ENCODE measurements at regions of chr11 and their contacts with region 1.

Region 1: GRCh38 chr11:47248664-47249377 is at the start of gene ACP2:
- DNase-seq: peak; percentile 90
- H3K4me3 Mint-ChIP-seq: peak within 1 kb of the TSS; percentile 98
- H3K27ac Mint-ChIP-seq: peak within 1 kb of the TSS; percentile 93
- H3K4me1 Mint-ChIP-seq: peaks cover 25% of the 10 kb centered on the region
- H3K27me3 Mint-ChIP-seq: no peaks in the 10 kb centered on the region
- total RNA-seq, gene ACP2: 26.6 to 27.1 TPM

Region 2: DNA sequence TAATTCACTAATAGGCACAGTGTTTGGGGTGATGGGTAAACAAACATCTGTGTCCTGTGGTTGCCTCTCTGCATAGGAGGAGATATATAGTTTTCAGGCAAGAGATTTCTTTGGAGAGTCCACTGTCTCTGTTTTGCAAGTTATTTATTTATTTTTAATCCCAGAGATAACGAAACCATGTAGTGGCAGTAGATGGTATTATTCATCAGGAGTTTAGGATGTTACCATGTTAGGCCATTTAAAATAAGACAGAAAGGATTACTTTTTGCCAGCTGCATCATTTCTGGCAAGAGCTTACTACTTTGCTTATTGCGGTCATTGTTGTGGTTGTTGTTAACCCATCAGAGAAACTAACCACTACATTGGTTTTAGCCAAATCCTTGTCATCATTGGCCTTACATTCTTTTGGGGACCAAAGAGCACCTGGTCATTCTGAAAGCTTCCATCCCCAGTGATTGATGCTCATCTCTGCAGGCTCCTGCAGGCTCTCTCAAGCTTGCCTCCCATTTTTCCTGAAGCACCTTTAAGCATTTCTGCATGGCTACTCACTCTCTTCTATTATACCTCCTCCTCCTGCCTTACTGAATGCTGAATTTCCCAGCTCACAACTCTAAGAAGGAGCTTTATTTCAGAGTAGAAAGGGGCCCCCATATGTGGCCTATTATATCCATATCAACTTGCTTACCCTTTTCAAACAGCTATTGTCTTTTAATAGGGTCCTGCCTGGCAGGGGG is 227.9 kb before region 1 on chr11:
- CTCF ChIA-PET with region 1: no interaction called
- POLR2A ChIA-PET with region 1: no interaction called
- DNase-seq: no peak
- H3K4me3 Mint-ChIP-seq: no peak overlapping the region
- H3K27ac Mint-ChIP-seq: no peak overlapping the region
- H3K4me1 Mint-ChIP-seq: peaks cover 2% of the 10 kb centered on the region
- H3K27me3 Mint-ChIP-seq: no peaks in the 10 kb centered on the region

Region 3: DNA sequence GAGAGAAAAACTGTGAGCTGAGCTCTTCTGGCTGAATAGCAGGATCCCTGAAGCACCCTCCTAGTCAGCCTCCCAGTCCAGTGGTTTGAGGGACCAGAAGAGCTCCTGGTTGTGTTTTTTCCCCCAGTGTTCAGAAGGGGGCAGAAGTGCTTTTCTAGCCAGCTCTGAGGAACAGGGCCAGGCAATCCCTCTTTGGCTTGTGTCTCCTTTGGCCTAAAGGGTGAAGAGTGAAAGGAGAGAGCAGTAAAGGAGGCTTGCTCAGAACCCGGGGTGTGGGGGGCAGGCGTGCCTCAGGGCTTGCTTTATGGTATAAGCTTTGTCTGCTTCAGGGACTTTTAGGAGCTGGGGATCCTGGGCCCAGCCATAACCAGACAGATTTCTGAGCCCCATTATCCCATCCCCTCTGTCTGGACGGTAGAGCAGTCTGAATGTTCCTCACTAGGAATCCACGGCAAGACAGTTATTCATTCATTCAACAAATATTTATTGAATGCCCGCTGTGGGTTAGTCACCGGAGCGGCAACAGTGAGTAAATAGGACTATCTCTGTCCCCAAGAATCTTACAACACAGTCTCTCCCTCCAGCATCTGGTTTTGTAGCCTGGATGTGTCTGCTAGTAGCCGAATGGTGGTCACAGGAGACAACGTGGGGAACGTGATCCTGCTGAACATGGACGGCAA is 14.7 kb before region 1 on chr11:
- CTCF ChIA-PET with region 1: interaction called, 25 read pairs
- POLR2A ChIA-PET with region 1: interaction called, 49 read pairs
- DNase-seq: no peak
- H3K4me3 Mint-ChIP-seq: no peak overlapping the region
- H3K27ac Mint-ChIP-seq: peak overlapping the region; percentile 77
- H3K4me1 Mint-ChIP-seq: peaks cover 26% of the 10 kb centered on the region
- H3K27me3 Mint-ChIP-seq: no peaks in the 10 kb centered on the region

Region 4: GRCh38 chr11:47259178-47259977 is 10.6 kb after region 1 on chr11:
- CTCF ChIA-PET with region 1: interaction called, 39 read pairs
- POLR2A ChIA-PET with region 1: interaction called, 33 read pairs
- DNase-seq: peak; percentile 36
- H3K4me3 Mint-ChIP-seq: no peak overlapping the region
- H3K27ac Mint-ChIP-seq: no peak overlapping the region
- H3K4me1 Mint-ChIP-seq: peaks cover 9% of the 10 kb centered on the region
- H3K27me3 Mint-ChIP-seq: no peaks in the 10 kb centered on the region

Region 5: DNA sequence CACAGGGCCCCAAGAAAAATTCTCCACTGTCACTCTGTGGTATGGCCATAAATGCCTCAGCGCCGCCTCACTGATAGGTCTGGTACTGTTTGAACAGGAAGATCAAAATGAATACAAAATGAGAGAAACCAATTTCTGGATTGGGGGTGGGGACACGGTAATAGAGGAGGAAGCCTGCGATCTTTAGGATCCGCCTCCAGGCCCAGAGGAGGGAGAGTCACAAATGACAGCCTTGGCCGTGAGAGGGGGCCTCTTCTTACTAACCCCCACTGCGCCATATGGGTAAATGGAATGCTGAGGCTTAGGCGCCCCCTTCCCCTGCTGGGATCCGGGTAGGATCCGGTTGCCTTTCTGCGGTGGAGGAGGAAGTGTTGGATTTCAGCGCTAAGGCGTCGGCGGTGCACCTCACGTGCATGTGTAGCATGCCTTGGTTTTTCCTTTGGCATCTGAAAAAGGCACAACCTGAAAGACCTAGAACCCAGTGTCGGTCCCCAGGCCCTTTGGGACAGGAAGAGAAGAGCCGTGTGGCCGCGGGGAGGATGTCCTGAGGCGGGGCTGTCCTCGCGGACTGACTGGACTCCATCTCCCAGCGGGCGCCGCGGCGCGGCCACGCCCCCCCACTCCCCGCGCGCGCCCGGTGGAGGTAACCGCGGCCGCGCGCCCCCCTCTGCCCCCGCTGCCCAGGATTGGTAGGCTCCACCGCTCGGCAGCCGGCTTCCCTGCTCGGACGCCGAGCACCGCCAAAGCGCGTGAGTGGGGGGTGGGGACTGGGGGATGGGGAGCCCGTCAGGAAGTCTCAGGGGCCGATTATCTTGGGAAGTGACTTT is 20.4 kb after region 1 on chr11:
- CTCF ChIA-PET with region 1: interaction called, 12 read pairs
- POLR2A ChIA-PET with region 1: interaction called, 33 read pairs
- DNase-seq: peak; percentile 87
- H3K4me3 Mint-ChIP-seq: peak overlapping the region; percentile 76
- H3K27ac Mint-ChIP-seq: peak overlapping the region; percentile 97
- H3K4me1 Mint-ChIP-seq: peaks cover 59% of the 10 kb centered on the region
- H3K27me3 Mint-ChIP-seq: no peaks in the 10 kb centered on the region